PC-9 (cell line): ENCODE measurements at regions of chr12 and their contacts with region 1.

Region 1: DNA sequence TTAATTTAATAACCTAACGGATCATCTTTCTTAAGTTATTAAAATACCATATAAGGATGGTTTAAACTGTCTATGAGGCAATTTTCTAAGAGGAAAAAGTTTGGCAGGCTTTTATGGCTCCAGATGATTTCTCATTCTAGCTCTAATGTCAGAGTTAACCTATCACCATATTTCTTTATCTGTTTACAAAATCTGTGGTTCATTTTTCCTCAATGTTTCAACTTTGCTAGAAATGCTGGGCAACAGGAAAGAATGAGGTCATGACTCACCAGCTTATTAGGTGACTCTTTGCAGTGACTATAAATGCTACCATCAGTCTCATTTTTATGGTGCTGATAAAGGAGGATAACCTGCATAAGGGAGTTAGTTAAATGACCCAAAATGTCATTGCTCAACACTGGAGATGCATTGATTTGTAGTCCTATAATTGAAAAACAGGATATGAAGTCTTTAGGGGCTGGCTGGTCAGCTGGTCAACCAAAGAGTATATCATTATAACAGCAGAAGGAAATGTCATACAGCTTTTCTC is 45.3 kb upstream of the RAP1B start:
- DNase-seq: peak; percentile 32 to 96
- H3K4me3 ChIP-seq: no peak overlapping the region
- H3K27ac ChIP-seq: no peak overlapping the region
- H3K4me1 ChIP-seq: peaks cover 24% of the 10 kb centered on the region
- H3K27me3 ChIP-seq: no peaks in the 10 kb centered on the region
- CTCF ChIP-seq: no peak

Region 2: DNA sequence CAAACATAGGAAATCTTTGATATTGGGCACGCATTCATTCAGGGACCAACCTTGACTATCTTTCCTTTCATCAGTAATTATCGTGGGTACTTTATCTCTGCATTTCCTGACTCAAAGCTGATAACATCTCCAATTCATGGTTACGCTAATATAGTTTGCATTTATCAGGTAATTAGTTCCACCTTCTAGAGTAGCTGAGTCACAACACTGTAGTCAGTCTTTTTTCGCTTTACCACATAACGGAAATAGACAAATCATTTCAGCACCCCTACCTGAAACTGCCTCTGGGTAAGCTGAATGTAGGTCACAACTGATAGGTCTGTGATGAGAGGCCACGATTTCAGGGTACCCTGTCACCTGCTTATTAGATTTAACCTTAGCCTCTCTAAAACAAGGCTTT is 275.3 kb before region 1 on chr12:
- CTCF ChIA-PET with region 1: no interaction called
- POLR2A ChIA-PET with region 1: no interaction called
- intact Hi-C with region 1: no loop called
- DNase-seq: peak in 1 of 2 experiments; percentile 71
- H3K4me3 ChIP-seq: no peak overlapping the region
- H3K27ac ChIP-seq: no peak overlapping the region
- H3K4me1 ChIP-seq: peaks cover 11% of the 10 kb centered on the region; the same call in 1 of the 2 replicates
- H3K27me3 ChIP-seq: no peaks in the 10 kb centered on the region
- CTCF ChIP-seq: no peak

Region 3: GRCh38 chr12:68587448-68587873 is 22.0 kb after region 1 on chr12:
- CTCF ChIA-PET with region 1: interaction called, 5 read pairs
- POLR2A ChIA-PET with region 1: interaction called, 12 read pairs
- intact Hi-C with region 1: no loop called
- DNase-seq: no peak
- H3K4me3 ChIP-seq: no peak overlapping the region
- H3K27ac ChIP-seq: no peak overlapping the region
- H3K4me1 ChIP-seq: peaks cover 19% of the 10 kb centered on the region
- H3K27me3 ChIP-seq: no peaks in the 10 kb centered on the region
- CTCF ChIP-seq: no peak

Region 4: DNA sequence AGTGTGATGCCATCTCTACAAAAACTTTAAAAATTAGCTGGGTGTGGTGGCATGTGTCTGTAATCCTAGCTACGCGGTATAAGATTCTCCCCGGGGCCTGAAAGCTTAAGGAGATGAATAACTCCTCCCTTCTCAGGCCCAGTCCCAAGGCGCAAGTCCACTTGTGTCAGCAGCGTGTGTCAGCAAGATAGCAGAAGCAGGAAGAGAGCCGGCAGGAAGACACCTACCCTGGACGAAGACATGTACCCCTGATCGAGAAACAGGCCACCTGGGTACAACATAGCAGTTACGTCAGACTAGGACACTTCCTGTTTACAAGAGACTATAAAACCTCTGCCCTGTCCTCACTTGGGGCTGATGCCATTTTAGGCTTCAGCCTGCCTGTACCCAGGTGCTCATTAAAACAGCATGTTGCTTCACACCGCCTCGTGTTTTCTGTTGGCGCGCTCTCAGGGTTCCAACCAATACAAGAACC is 324.2 kb after region 1 on chr12:
- CTCF ChIA-PET with region 1: no interaction called
- POLR2A ChIA-PET with region 1: no interaction called
- intact Hi-C with region 1: no loop called
- DNase-seq: no peak
- H3K4me3 ChIP-seq: no peak overlapping the region
- H3K27ac ChIP-seq: no peak overlapping the region
- H3K4me1 ChIP-seq: no peaks in the 10 kb centered on the region
- H3K27me3 ChIP-seq: no peaks in the 10 kb centered on the region
- CTCF ChIP-seq: no peak